ENCODE measurements at regions of chr11 and their contacts with region 1.

Region 1: GRCh38 chr11:86802601-86803051 is 2.3 kb downstream of the PRSS23 start:
- DNase-seq: peak; percentile 74
- H3K4me3 Mint-ChIP-seq: peak overlapping the region; percentile 87
- H3K27ac Mint-ChIP-seq: peak overlapping the region; percentile 65
- H3K4me1 Mint-ChIP-seq: peaks cover 50% of the 10 kb centered on the region
- H3K27me3 Mint-ChIP-seq: peaks cover 27% of the 10 kb centered on the region

Region 2: DNA sequence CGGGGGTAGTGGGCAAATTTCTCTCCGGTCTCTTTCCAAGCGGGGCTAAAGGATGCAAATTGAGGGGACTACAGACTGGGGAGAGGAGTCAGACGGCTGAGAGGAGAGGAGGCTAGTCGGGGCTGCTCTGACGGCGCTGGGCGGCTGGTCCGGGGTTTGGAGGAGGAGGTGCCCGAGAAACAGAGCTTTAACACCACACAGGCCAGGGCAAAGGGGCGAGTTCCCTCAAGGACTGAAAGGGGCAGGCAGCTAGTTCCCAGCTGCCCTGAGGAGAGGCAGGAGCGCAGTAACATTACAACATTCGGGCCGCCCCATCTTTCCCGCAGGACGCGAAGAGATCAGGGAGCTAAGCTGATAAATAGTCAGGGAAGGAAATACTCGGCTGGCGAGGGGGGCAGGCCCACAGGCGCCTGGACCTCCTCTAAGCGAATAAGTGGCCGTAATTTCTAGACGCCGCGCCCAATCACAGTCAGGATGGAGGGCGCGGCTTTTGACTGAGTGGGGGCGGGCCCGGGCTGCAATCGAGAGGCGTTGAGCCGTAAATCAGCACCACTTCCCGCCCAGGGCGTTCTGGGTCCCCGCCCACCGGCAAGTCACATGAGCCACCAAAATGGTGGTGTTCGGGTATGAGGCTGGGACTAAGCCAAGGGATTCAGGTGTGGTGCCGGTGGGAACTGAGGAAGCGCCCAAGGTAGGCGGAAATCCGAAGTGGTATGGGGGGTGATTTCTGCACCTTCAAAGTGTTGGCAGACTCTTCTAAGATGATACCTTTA is 1174.4 kb before region 1 on chr11 and contains the start of gene TMEM126B:
- intact Hi-C with region 1: loop called (anchors 5 kb)
- DNase-seq: peak; percentile 99
- H3K4me3 Mint-ChIP-seq: peak within 1 kb of the TSS; percentile 96
- H3K27ac Mint-ChIP-seq: peak within 1 kb of the TSS; percentile 95
- H3K4me1 Mint-ChIP-seq: peaks cover 43% of the 10 kb centered on the region
- H3K27me3 Mint-ChIP-seq: peaks cover 2% of the 10 kb centered on the region
- total RNA-seq, gene TMEM126B: 52.2 and 54.4 TPM in 2 replicates

Region 3: GRCh38 chr11:86041975-86042378 is 760.6 kb before region 1 on chr11:
- intact Hi-C with region 1: loop called (anchors 10 kb)
- DNase-seq: peak; percentile 88
- H3K4me3 Mint-ChIP-seq: peak overlapping the region; percentile 45
- H3K27ac Mint-ChIP-seq: peak overlapping the region; percentile 73
- H3K4me1 Mint-ChIP-seq: peaks cover 57% of the 10 kb centered on the region
- H3K27me3 Mint-ChIP-seq: no peaks in the 10 kb centered on the region

Region 4: GRCh38 chr11:86497790-86498189 is 304.8 kb before region 1 on chr11:
- intact Hi-C with region 1: no loop called
- DNase-seq: no peak
- H3K4me3 Mint-ChIP-seq: no peak overlapping the region
- H3K27ac Mint-ChIP-seq: no peak overlapping the region
- H3K4me1 Mint-ChIP-seq: peaks cover 3% of the 10 kb centered on the region
- H3K27me3 Mint-ChIP-seq: peaks cover 5% of the 10 kb centered on the region

Region 5: GRCh38 chr11:86523738-86524619 is 278.6 kb before region 1 on chr11:
- intact Hi-C with region 1: loop called (anchors 1 kb)
- DNase-seq: no peak
- H3K4me3 Mint-ChIP-seq: peak overlapping the region; percentile 35
- H3K27ac Mint-ChIP-seq: peak overlapping the region; percentile 88
- H3K4me1 Mint-ChIP-seq: peaks cover 28% of the 10 kb centered on the region
- H3K27me3 Mint-ChIP-seq: no peaks in the 10 kb centered on the region

Region 6: GRCh38 chr11:86671682-86672621 is 130.7 kb before region 1 on chr11 and contains the start of gene ME3:
- intact Hi-C with region 1: loop called (anchors 5 kb)
- DNase-seq: peak; percentile 86
- H3K4me3 Mint-ChIP-seq: peak within 1 kb of the TSS; percentile 76
- H3K27ac Mint-ChIP-seq: peak within 1 kb of the TSS; percentile 63
- H3K4me1 Mint-ChIP-seq: peaks cover 12% of the 10 kb centered on the region
- H3K27me3 Mint-ChIP-seq: peaks cover 34% of the 10 kb centered on the region
- total RNA-seq, gene ME3: 12.2 and 12.9 TPM in 2 replicates

Region 7: GRCh38 chr11:86761978-86762377 is 40.6 kb before region 1 on chr11:
- intact Hi-C with region 1: no loop called
- DNase-seq: no peak
- H3K4me3 Mint-ChIP-seq: no peak overlapping the region
- H3K27ac Mint-ChIP-seq: no peak overlapping the region
- H3K4me1 Mint-ChIP-seq: no peaks in the 10 kb centered on the region
- H3K27me3 Mint-ChIP-seq: peaks cover 9% of the 10 kb centered on the region

Region 8: GRCh38 chr11:86818466-86819192 is 16.0 kb after region 1 on chr11:
- intact Hi-C with region 1: loop called (anchors 2 kb)
- DNase-seq: peak; percentile 73
- H3K4me3 Mint-ChIP-seq: no peak overlapping the region
- H3K27ac Mint-ChIP-seq: peak overlapping the region; percentile 17
- H3K4me1 Mint-ChIP-seq: peaks cover 11% of the 10 kb centered on the region
- H3K27me3 Mint-ChIP-seq: peaks cover 27% of the 10 kb centered on the region